Astrocyte of the cerebellum (primary cell): ENCODE measurements at regions of chr6 and their contacts with region 1.

Region 1: GRCh38 chr6:125114248-125114858 is 39.2 kb upstream of the TPD52L1 start:
- DNase-seq: peak; percentile 47
- H3K4me3 ChIP-seq: no peak overlapping the region
- CTCF ChIP-seq: peak; percentile 76

Region 2: DNA sequence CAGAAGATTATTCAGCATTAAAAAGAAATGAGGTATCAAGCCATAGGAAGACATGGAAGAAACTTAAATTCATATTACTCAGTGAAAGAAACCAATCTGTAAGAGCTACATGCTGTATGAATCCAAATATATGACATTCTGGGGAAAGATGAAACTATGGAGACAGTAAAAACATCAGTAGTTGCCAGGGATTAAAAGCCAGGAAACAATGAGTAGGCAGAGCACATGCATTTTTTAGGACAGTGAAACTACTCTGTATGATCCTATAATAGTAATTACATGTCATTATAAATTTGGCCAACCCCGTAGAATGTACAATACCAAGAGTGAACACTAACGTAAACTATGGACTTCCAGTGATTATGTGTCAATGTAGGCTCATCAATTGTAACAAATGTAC is 244.9 kb before region 1 on chr6:
- in situ Hi-C with region 1: loop called (anchors 5 kb)
- DNase-seq: no peak
- H3K4me3 ChIP-seq: no peak overlapping the region
- CTCF ChIP-seq: no peak